Dorsolateral prefrontal cortex (tissue), 120 donors: ENCODE measurements at regions of chr13 and their contacts with region 1.

Region 1: GRCh38 chr13:97659602-97660001 is 225.6 kb downstream of the RAP2A start:
- DNase-seq: peak in 8 of 10 donors; percentile 9 to 55 (median 44)
- H3K4me3 ChIP-seq: no peak overlapping the region
- H3K27ac ChIP-seq: no peak overlapping the region
- H3K27me3 ChIP-seq: no peaks in the 10 kb centered on the region
- CTCF ChIP-seq: peak in 54 of 56 donors; percentile 25 to 77 (median 54)

Region 2: GRCh38 chr13:97018029-97018831 is 641.4 kb before region 1 on chr13:
- intact Hi-C with region 1: loop called in 1 of 2 experiments (anchors 5 kb)
- DNase-seq: peak in 4 of 10 donors; percentile 13 to 54 (median 40)
- H3K4me3 ChIP-seq: peak overlapping the region in 14 of 59 donors; percentile 0 to 36 (median 12)
- H3K27ac ChIP-seq: no peak overlapping the region
- H3K27me3 ChIP-seq: no peaks in the 10 kb centered on the region
- CTCF ChIP-seq: peak; percentile 79 to 98 (median 90)

Region 3: DNA sequence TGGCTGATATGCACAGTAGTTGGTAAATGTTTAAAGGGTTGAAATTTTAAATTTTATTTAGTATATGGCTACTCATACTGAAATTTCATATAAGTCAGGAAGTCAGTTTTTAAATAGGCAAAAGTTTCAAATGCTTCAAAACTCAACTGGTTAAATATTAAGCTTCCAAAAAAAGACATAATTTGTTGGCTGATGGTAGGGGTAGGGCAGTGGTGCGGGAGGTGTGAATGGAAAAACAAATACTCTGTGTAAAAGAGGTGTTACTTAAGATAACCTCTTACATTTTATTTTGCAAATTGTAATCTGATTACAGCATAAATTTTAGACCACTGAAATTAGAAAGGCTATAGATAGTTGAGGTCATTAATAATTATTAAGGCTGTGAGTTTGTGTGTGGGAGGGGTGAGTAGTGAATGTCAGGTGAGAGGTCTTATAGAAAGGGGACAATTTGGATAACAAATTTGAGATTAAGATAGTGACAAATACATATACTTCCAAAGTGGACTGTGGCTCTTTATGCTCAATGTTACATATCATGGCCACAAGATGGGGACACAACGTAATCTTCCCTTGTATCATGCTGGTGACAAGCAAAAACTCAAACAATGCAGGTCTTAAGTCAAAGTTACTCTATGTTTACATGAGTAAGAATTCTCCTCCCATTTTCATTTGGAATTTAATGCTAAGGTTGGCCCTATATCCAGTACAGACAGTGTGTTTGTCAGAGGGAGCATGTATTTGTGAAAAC is 628.7 kb before region 1 on chr13:
- intact Hi-C with region 1: loop called in 1 of 2 experiments (anchors 5 kb)
- DNase-seq: no peak
- H3K4me3 ChIP-seq: no peak overlapping the region
- H3K27ac ChIP-seq: no peak overlapping the region
- H3K27me3 ChIP-seq: no peaks in the 10 kb centered on the region
- CTCF ChIP-seq: peak in 50 of 56 donors; percentile 15 to 62 (median 38)

Region 4: GRCh38 chr13:97109841-97110492 is 549.6 kb before region 1 on chr13:
- intact Hi-C with region 1: loop called in 1 of 2 experiments (anchors 5 kb)
- DNase-seq: peak; percentile 85 to 95 (median 88)
- H3K4me3 ChIP-seq: peak overlapping the region in 58 of 59 donors; percentile 11 to 69 (median 50)
- H3K27ac ChIP-seq: peak overlapping the region in 58 of 59 donors; percentile 8 to 89 (median 75)
- H3K27me3 ChIP-seq: no peaks in the 10 kb centered on the region
- CTCF ChIP-seq: peak; percentile 95 to 100 (median 99)